Activated CD4-positive, alpha-beta T cell treated with anti-CD3 and anti-CD28 coated beads, Interleukin-2, amount 10 ng/mL, durations not matched to agents 24 days and 14 days (primary cell): ENCODE measurements at regions of chr10 and their contacts with region 1.

Region 1: DNA sequence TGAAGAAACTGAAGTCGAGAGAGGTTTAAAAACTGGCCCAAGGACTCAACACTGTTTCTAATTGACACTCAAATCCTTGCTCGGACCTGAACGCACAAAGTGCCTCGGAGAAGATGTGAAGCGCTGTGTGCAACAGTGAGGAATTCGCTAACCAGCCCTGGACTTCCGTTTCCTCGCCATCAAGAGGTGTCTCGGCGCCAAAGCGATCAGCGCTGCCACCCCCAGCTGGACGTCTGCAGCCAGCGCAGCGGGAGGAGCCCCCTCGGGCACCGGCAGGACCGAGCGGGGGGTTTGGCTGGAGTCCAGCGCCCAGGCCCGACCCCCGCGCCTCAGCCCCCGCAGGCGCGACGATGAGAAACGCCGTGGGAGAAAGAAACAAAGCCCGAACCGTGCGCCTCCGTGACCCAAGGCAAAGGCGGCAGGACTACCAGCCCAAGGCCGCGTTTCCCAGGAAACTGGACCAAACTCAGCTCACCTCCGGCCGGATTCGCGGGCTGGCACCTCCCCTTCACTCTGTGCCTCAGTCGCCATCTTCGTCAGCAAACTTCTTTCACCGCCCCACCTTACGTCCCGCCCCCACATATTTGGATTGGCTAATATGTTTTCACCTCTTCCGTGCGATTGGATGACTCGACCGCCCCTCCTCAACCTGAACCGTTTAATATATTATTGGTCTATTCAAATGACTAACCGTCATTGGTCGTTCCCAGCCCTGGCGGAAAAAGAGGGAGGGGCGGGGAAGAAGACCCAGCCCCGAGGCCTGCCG is at the start of gene ARHGAP19:
- DNase-seq: peak; percentile 98
- H3K4me3 Mint-ChIP-seq: peak within 1 kb of the TSS; percentile 88
- H3K27ac Mint-ChIP-seq: peak within 1 kb of the TSS; percentile 87
- H3K4me1 Mint-ChIP-seq: peaks cover 23% of the 10 kb centered on the region
- H3K27me3 Mint-ChIP-seq: no peaks in the 10 kb centered on the region
- total RNA-seq, gene ARHGAP19: 26.4 and 30.7 TPM in 2 replicates

Region 2: GRCh38 chr10:97318772-97319651 is 26.7 kb after region 1 on chr10 and contains the start of gene FRAT1:
- intact Hi-C with region 1: loop called (anchors 1 kb)
- DNase-seq: peak; percentile 97
- H3K4me3 Mint-ChIP-seq: peak within 1 kb of the TSS; percentile 92
- H3K27ac Mint-ChIP-seq: peak within 1 kb of the TSS; percentile 99
- H3K4me1 Mint-ChIP-seq: peaks cover 23% of the 10 kb centered on the region
- H3K27me3 Mint-ChIP-seq: peaks cover 12% of the 10 kb centered on the region
- total RNA-seq, gene FRAT1: 2.0 and 2.5 TPM in 2 replicates

Region 3: GRCh38 chr10:97400665-97401454 is 108.6 kb after region 1 on chr10 and contains the start of gene RRP12:
- intact Hi-C with region 1: loop called (anchors 5 kb)
- DNase-seq: peak; percentile 97
- H3K4me3 Mint-ChIP-seq: peak within 1 kb of the TSS; percentile 97
- H3K27ac Mint-ChIP-seq: peak within 1 kb of the TSS; percentile 94
- H3K4me1 Mint-ChIP-seq: peaks cover 16% of the 10 kb centered on the region
- H3K27me3 Mint-ChIP-seq: no peaks in the 10 kb centered on the region
- total RNA-seq, gene RRP12: 99.4 and 106 TPM in 2 replicates